PC-3 (cell line): ENCODE measurements at regions of chr7 and their contacts with region 1.

Region 1: GRCh38 chr7:103344453-103345149 is at the start of gene DNAJC2:
- DNase-seq: peak; percentile 88
- ATAC-seq: peak; percentile 83
- H3K4me3 ChIP-seq: peak within 1 kb of the TSS; percentile 88
- H3K27ac ChIP-seq: peak within 1 kb of the TSS; percentile 71
- H3K4me1 ChIP-seq: peaks cover 17% of the 10 kb centered on the region
- H3K27me3 ChIP-seq: no peaks in the 10 kb centered on the region
- CTCF ChIP-seq: no peak
- total RNA-seq, gene DNAJC2: 21.7 and 30.6 TPM in 2 replicates

Region 2: GRCh38 chr7:103148994-103149807 is 195.4 kb before region 1 on chr7 and contains the start of gene NAPEPLD:
- CTCF ChIA-PET with region 1: interaction called, 4 read pairs
- POLR2A ChIA-PET with region 1: no interaction called
- intact Hi-C with region 1: loop called (anchors 10 kb)
- DNase-seq: peak; percentile 83
- ATAC-seq: peak; percentile 88
- H3K4me3 ChIP-seq: peak within 1 kb of the TSS; percentile 86
- H3K27ac ChIP-seq: peak within 1 kb of the TSS; percentile 85
- H3K4me1 ChIP-seq: peaks cover 24% of the 10 kb centered on the region
- H3K27me3 ChIP-seq: no peaks in the 10 kb centered on the region
- CTCF ChIP-seq: no peak
- total RNA-seq, gene NAPEPLD: 2.5 and 3.9 TPM in 2 replicates

Region 3: GRCh38 chr7:103307503-103308231 is 36.9 kb before region 1 on chr7:
- CTCF ChIA-PET with region 1: no interaction called
- POLR2A ChIA-PET with region 1: no interaction called
- intact Hi-C with region 1: loop called (anchors 5 kb)
- DNase-seq: peak; percentile 68
- ATAC-seq: peak; percentile 95
- H3K4me3 ChIP-seq: no peak overlapping the region
- H3K27ac ChIP-seq: peak overlapping the region; percentile 45
- H3K4me1 ChIP-seq: peaks cover 12% of the 10 kb centered on the region
- H3K27me3 ChIP-seq: no peaks in the 10 kb centered on the region
- CTCF ChIP-seq: no peak

Region 4: DNA sequence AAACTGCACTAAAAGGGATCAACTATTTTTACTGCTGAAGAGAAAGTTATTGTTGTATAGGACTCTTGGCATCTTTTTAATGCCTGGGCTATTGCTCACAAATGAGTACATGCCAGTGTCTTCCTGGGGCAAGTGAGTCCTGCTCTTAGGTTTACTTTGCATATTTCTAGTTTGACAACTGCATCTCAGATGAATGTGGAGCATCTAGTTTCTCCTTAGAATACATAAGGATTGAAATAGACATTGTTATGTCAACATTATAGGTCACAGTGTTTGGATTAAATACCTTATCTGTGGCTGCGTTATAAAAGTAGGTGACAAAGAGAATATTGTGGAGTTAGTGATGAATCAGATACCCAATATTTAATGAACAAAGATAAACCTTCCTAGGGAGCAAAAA is 47.4 kb after region 1 on chr7:
- CTCF ChIA-PET with region 1: no interaction called
- POLR2A ChIA-PET with region 1: no interaction called
- intact Hi-C with region 1: loop called (anchors 1 kb)
- DNase-seq: peak; percentile 88
- ATAC-seq: peak; percentile 95
- H3K4me3 ChIP-seq: peak overlapping the region; percentile 29; the same call in 1 of the 2 replicates
- H3K27ac ChIP-seq: peak overlapping the region; percentile 82
- H3K4me1 ChIP-seq: peaks cover 24% of the 10 kb centered on the region
- H3K27me3 ChIP-seq: no peaks in the 10 kb centered on the region
- CTCF ChIP-seq: no peak

Region 5: GRCh38 chr7:103751311-103751880 is 406.8 kb after region 1 on chr7:
- CTCF ChIA-PET with region 1: no interaction called
- POLR2A ChIA-PET with region 1: no interaction called
- intact Hi-C with region 1: no loop called
- DNase-seq: no peak
- ATAC-seq: no peak
- H3K4me3 ChIP-seq: no peak overlapping the region
- H3K27ac ChIP-seq: no peak overlapping the region
- H3K4me1 ChIP-seq: peaks cover 3% of the 10 kb centered on the region; the same call in 1 of the 2 replicates
- H3K27me3 ChIP-seq: no peaks in the 10 kb centered on the region
- CTCF ChIP-seq: no peak